ENCODE measurements at regions of chr20 and their contacts with region 1.

Region 1: DNA sequence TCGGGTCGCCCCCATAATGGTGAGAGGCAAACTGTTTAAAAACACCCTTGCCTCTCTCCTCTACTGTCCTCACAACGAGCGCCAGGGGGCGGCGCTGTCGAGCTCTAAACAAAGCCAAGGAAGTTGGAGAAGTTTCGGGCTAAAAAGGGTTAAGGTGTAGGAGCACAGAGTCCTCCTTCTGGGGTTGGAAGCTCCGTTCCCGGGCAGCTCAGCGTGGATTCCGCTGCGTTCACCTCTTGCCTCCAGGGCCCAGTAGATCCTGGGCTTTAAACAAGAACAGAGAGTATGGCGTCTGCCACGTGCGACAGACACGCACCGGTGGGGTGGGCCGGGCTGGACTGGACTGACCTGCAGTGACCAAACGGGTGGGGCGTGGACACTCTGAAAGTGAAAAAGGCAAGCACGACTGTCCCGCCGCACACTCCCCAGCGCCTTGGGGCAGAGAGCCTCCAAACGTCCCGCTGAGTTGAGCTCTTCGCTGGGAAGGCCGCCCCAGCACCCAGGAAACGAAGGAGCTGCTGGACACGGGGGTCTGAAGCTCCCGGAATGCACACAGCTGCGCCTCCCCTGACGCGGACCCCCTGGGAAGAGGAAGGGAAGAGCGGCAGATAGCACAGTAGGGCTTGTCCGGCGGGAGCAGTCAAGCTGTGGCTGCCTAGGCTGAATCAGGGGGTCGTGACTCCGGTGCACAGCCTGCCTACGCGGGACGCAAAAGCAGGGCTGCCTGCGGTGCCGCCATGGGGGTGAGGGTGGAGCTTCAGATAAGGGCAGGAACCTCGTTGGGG is 1.6 kb upstream of the THBD start:
- DNase-seq: no peak
- ATAC-seq: peak; percentile 64
- H3K4me3 ChIP-seq: no peak overlapping the region
- H3K27ac ChIP-seq: no peak overlapping the region
- H3K4me1 ChIP-seq: no peaks in the 10 kb centered on the region
- H3K27me3 ChIP-seq: peaks cover 8% of the 10 kb centered on the region in 2 experiments; a peak in 3 of 4 replicates
- CTCF ChIP-seq: peak; percentile 42 to 54 (median 49); a peak in 4 of 6 replicates
- EP300 ChIP-seq: no peak
- POLR2A ChIP-seq: no peak
- RAD21 ChIP-seq: peak; percentile 84

Region 2: GRCh38 chr20:22789676-22790075 is 261.4 kb before region 1 on chr20:
- CTCF ChIA-PET with region 1: no interaction called
- POLR2A ChIA-PET with region 1: no interaction called
- RAD21 ChIA-PET with region 1: no interaction called
- SMC1A ChIA-PET with region 1: no interaction called
- in situ Hi-C with region 1: no loop called
- intact Hi-C with region 1: no loop called
- DNase-seq: no peak
- ATAC-seq: no peak
- H3K4me3 ChIP-seq: no peak overlapping the region
- H3K27ac ChIP-seq: no peak overlapping the region
- H3K4me1 ChIP-seq: no peaks in the 10 kb centered on the region
- H3K27me3 ChIP-seq: no peaks in the 10 kb centered on the region
- CTCF ChIP-seq: no peak
- EP300 ChIP-seq: no peak
- POLR2A ChIP-seq: no peak
- RAD21 ChIP-seq: no peak

Region 3: DNA sequence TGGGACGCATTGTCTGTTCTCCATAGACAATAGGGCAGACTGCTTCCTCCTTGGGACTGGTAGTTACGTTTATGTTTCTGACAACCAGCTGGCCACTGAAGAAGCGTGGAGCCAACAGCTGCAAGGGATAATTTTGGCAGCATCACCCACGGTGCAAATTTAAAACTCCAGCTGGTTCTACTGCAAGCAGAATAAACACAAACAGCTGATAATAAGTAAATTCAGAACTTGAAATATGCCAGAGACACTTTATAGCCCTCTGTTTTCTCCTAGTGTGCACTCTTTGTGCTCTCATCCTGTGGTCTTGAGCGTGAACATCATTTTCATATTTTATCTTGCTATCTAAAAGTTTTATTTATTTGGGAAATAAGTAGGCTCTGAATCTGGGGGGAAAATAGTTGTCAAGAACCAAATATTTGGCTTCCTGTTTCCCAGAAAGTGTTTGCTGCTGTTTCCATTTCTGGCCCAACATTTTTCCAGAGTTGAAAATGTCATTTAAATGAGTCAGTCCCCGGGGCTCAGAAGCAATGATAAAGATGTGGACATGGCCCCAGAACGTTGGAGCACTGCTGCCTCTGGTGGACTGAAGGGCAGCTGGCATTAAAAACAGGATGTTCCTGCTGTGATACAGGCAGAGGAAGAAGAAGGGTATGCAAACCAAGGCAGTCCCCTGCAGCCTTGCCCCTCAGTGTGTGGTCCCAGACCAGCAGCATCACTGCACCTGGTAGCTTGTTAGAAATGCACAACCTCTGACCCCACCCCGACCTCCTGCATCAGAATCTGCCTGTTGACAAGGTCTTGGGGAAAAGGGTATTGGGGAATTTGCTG is 10.9 kb after region 1 on chr20:
- CTCF ChIA-PET with region 1: interaction called, 11 read pairs
- POLR2A ChIA-PET with region 1: interaction called, 3 read pairs
- RAD21 ChIA-PET with region 1: no interaction called
- SMC1A ChIA-PET with region 1: interaction called, 27 read pairs
- in situ Hi-C with region 1: no loop called
- intact Hi-C with region 1: no loop called
- DNase-seq: no peak
- ATAC-seq: peak; percentile 31; the same call in 1 of the 3 replicates
- H3K4me3 ChIP-seq: no peak overlapping the region
- H3K27ac ChIP-seq: no peak overlapping the region
- H3K4me1 ChIP-seq: no peaks in the 10 kb centered on the region
- H3K27me3 ChIP-seq: no peaks in the 10 kb centered on the region
- CTCF ChIP-seq: peak in 2 of 3 experiments; percentile 13 to 14; a peak in 1 of 6 replicates
- EP300 ChIP-seq: no peak
- POLR2A ChIP-seq: no peak
- RAD21 ChIP-seq: peak; percentile 28; the same call in 1 of the 2 replicates

Region 4: GRCh38 chr20:23200918-23201317 is 149.9 kb after region 1 on chr20:
- CTCF ChIA-PET with region 1: interaction called, 30 read pairs
- POLR2A ChIA-PET with region 1: interaction called, 5 read pairs
- RAD21 ChIA-PET with region 1: interaction called, 25 read pairs
- SMC1A ChIA-PET with region 1: interaction called, 32 read pairs
- in situ Hi-C with region 1: no loop called
- intact Hi-C with region 1: loop called (anchors 5 kb)
- DNase-seq: no peak
- ATAC-seq: peak; percentile 84
- H3K4me3 ChIP-seq: no peak overlapping the region
- H3K27ac ChIP-seq: no peak overlapping the region
- H3K4me1 ChIP-seq: no peaks in the 10 kb centered on the region
- H3K27me3 ChIP-seq: peaks cover 0 to 4% of the 10 kb centered on the region in 2 experiments; a peak in 1 of 4 replicates
- CTCF ChIP-seq: peak; percentile 36 to 54 (median 40); a peak in 5 of 6 replicates
- EP300 ChIP-seq: no peak
- POLR2A ChIP-seq: no peak
- RAD21 ChIP-seq: peak; percentile 53

Region 5: GRCh38 chr20:23235173-23236027 is 184.4 kb after region 1 on chr20:
- CTCF ChIA-PET with region 1: interaction called, 34 read pairs
- POLR2A ChIA-PET with region 1: no interaction called
- RAD21 ChIA-PET with region 1: interaction called, 20 read pairs
- SMC1A ChIA-PET with region 1: interaction called, 16 read pairs
- in situ Hi-C with region 1: no loop called
- intact Hi-C with region 1: no loop called
- DNase-seq: no peak
- ATAC-seq: peak; percentile 94
- H3K4me3 ChIP-seq: no peak overlapping the region
- H3K27ac ChIP-seq: no peak overlapping the region
- H3K4me1 ChIP-seq: no peaks in the 10 kb centered on the region
- H3K27me3 ChIP-seq: no peaks in the 10 kb centered on the region
- CTCF ChIP-seq: peak; percentile 74 to 77 (median 74)
- EP300 ChIP-seq: no peak
- POLR2A ChIP-seq: no peak
- RAD21 ChIP-seq: peak; percentile 91

Region 6: DNA sequence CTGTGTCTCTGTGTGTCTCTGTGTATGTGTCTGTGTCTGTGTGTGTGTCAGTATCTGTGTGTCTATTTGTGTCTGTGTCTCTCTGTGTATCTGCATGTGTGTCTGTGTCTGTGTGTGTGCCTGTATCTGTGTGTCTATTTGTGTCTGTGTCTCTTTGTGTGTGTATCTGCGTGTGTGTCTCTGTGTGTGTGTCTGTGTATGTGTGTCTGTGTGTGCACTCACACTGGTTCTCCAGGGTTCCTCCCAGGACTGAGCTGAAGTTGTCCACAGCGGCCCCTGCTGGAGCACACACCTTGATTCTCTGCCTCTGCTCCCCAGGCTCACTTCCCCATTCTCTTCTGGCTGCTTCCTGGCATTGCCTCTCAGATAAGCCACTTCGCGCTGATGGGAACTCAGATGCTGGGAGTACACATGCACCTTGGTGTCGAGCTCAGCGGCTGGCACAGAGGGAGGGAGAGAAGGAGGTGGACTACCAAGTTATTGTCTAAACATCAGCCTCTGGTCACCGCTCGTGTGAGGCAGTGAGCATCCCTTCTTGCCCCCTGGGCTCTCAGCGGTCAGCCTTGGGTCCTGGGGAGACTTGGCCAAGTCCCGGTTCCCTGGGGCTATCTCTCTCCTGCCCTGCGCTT is 194.6 kb after region 1 on chr20:
- CTCF ChIA-PET with region 1: interaction called, 10 read pairs
- POLR2A ChIA-PET with region 1: no interaction called
- RAD21 ChIA-PET with region 1: interaction called, 5 read pairs
- SMC1A ChIA-PET with region 1: no interaction called
- in situ Hi-C with region 1: no loop called
- intact Hi-C with region 1: no loop called
- DNase-seq: peak; percentile 48
- ATAC-seq: peak; percentile 97
- H3K4me3 ChIP-seq: no peak overlapping the region
- H3K27ac ChIP-seq: no peak overlapping the region
- H3K4me1 ChIP-seq: peaks cover 24% of the 10 kb centered on the region
- H3K27me3 ChIP-seq: no peaks in the 10 kb centered on the region
- CTCF ChIP-seq: peak; percentile 71 to 77 (median 75)
- EP300 ChIP-seq: no peak
- POLR2A ChIP-seq: no peak
- RAD21 ChIP-seq: peak; percentile 56

Region 7: DNA sequence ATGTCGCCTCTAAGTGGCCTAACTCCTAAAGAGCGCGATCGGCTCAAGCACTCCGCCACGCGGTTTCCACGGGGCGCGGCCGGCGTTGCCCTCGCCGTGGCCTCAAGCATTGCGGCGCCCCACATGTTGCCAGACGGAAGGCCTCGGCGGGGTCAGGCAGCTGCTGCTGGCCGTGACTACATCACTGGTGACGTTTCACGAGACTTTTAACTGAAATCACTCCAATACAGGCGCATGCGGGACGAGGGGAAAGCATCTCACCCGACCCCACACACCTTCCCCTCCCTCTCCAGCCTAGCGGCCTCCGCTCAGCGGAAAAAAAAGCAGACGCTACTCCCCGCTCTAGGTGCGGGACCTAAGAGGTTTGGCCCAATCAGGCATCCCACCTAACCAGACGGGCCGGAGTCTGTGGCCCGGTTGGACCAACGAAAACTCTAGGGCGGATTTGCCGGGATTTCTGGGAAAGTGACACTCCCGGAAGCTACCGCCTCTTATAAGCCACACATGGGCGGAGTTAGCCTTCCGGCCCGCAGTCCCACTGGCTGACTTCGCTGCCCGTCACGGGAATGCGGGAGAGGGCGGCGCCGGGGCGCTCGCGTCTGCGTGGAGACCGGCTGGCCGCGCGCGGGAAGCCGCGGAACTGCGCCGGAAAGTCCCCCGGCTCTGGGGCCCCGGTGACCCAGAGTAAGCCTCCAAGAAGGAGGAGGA is 299.3 kb after region 1 on chr20 and contains the start of gene NXT1:
- CTCF ChIA-PET with region 1: interaction called, 3 read pairs
- POLR2A ChIA-PET with region 1: no interaction called
- RAD21 ChIA-PET with region 1: no interaction called
- SMC1A ChIA-PET with region 1: no interaction called
- in situ Hi-C with region 1: no loop called
- intact Hi-C with region 1: loop called (anchors 10 kb)
- DNase-seq: peak; percentile 92
- ATAC-seq: peak; percentile 92
- H3K4me3 ChIP-seq: peak within 1 kb of the TSS; percentile 89
- H3K27ac ChIP-seq: peak within 1 kb of the TSS; percentile 95
- H3K4me1 ChIP-seq: peaks cover 4% of the 10 kb centered on the region
- H3K27me3 ChIP-seq: no peaks in the 10 kb centered on the region
- CTCF ChIP-seq: peak in 2 of 3 experiments; percentile 16 to 18; a peak in 1 of 6 replicates
- EP300 ChIP-seq: peak in 1 of 2 experiments; percentile 12; a peak in 2 of 4 replicates
- POLR2A ChIP-seq: peak; percentile 83
- RAD21 ChIP-seq: no peak
- polyA plus RNA-seq, gene NXT1: 10.2 to 24.2 TPM

Measured in GM12878 (cell line).